Vagina (tissue), 2 donors: ENCODE measurements at regions of chr2 and their contacts with region 1.

Region 1: GRCh38 chr2:216698895-216699294 is 3.5 kb upstream of the IGFBP5 start:
- DNase-seq: no peak
- H3K4me3 ChIP-seq: no peak overlapping the region
- H3K27ac ChIP-seq: peak overlapping the region; percentile 71
- H3K4me1 ChIP-seq: peaks cover 41% of the 10 kb centered on the region
- H3K27me3 ChIP-seq: no peaks in the 10 kb centered on the region
- CTCF ChIP-seq: peak; percentile 34 to 56 (median 40)
- POLR2A ChIP-seq: no peak

Region 2: GRCh38 chr2:216974321-216975302 is 275.7 kb after region 1 on chr2:
- intact Hi-C with region 1: loop called (anchors 5 kb)
- DNase-seq: no peak
- H3K4me3 ChIP-seq: no peak overlapping the region
- H3K27ac ChIP-seq: peak overlapping the region; percentile 74
- H3K4me1 ChIP-seq: peaks cover 23% of the 10 kb centered on the region
- H3K27me3 ChIP-seq: no peaks in the 10 kb centered on the region
- CTCF ChIP-seq: no peak
- POLR2A ChIP-seq: no peak

Region 3: GRCh38 chr2:217166241-217166850 is 467.5 kb after region 1 on chr2:
- intact Hi-C with region 1: loop called (anchors 10 kb)
- DNase-seq: no peak
- H3K4me3 ChIP-seq: no peak overlapping the region
- H3K27ac ChIP-seq: no peak overlapping the region
- H3K4me1 ChIP-seq: no peaks in the 10 kb centered on the region
- H3K27me3 ChIP-seq: no peaks in the 10 kb centered on the region
- CTCF ChIP-seq: peak in 1 of 3 experiments; percentile 35
- POLR2A ChIP-seq: no peak

Region 4: DNA sequence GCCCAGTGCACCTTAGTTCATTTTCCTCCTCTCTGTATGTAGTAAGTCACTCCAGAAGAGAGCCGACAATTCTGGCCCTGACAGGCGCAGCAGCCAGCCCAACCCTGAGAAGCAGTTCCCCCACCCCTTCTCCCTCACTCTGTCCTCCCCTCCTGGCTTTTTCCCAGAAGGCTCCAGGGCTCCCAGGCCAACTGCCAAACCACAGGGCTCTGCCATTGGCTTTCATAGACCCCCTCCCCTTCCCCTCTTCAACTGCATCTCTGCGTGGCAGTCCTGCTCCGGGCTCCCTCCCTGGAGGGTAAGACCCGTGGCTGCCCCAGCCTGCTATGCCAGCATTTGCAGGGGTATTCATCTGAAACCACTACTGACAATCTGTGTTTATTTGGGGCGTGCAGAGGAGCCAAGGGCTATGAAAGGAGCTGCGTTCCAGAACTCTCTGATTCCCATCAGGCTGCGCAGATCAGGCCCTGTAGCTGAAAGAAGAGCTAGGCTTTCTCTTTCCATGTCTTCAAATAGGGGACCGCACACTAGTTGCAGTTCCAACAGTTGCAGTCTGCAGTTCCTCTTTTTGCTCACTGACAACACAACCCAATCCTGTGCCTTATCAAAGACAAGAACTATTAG is 549.5 kb after region 1 on chr2:
- intact Hi-C with region 1: loop called (anchors 5 kb)
- DNase-seq: no peak
- H3K4me3 ChIP-seq: no peak overlapping the region
- H3K27ac ChIP-seq: peak overlapping the region; percentile 80
- H3K4me1 ChIP-seq: peaks cover 35% of the 10 kb centered on the region
- H3K27me3 ChIP-seq: no peaks in the 10 kb centered on the region
- CTCF ChIP-seq: no peak
- POLR2A ChIP-seq: no peak

Region 5: DNA sequence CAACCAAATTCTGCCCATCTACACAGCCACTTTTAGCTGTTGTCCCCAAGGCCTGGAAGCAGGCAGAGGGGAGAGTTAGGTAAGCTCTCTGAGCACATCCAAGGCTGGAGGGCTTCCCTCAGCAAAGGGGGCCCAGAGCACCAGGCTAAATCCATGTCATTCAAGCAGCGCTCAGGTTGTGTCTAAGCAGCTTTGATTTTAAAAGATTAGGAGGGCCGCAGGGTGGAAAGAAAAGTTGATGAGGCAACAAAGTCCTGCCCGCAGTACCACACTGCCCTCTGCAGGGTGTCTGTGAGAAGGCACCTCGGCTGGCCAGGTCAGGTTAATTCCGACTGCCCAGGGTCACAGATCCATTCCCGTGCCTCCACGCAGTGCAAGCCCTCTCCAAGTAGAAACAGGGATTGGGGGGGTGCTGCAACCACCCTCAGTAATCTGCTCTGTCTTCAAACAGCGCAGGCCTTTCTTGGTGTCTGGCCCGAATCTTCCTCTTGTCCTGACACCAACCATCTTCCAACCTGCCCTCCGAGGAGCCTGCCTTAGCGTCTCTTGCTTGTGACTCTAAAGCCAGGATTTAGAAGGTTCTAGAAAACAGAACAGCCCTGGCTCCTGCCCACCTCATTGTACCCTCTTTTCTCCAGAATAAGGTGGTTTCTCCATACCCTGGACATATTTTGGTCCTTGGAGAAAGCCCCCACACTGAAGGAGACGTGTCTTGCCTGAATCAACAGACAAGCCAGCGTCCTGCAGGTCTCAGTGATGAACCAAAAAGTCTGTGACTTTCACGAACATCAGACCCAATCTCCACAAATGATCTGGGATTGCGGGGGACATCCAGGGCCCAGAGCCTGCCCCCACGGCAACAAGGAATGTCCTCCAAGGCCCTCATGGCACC is 1014.7 kb after region 1 on chr2:
- intact Hi-C with region 1: loop called (anchors 5 kb)
- DNase-seq: peak in 1 of 2 donors; percentile 86
- H3K4me3 ChIP-seq: no peak overlapping the region
- H3K27ac ChIP-seq: peak overlapping the region; percentile 75
- H3K4me1 ChIP-seq: peaks cover 52% of the 10 kb centered on the region
- H3K27me3 ChIP-seq: no peaks in the 10 kb centered on the region
- CTCF ChIP-seq: peak; percentile 70 to 96 (median 95)
- POLR2A ChIP-seq: no peak

Region 6: DNA sequence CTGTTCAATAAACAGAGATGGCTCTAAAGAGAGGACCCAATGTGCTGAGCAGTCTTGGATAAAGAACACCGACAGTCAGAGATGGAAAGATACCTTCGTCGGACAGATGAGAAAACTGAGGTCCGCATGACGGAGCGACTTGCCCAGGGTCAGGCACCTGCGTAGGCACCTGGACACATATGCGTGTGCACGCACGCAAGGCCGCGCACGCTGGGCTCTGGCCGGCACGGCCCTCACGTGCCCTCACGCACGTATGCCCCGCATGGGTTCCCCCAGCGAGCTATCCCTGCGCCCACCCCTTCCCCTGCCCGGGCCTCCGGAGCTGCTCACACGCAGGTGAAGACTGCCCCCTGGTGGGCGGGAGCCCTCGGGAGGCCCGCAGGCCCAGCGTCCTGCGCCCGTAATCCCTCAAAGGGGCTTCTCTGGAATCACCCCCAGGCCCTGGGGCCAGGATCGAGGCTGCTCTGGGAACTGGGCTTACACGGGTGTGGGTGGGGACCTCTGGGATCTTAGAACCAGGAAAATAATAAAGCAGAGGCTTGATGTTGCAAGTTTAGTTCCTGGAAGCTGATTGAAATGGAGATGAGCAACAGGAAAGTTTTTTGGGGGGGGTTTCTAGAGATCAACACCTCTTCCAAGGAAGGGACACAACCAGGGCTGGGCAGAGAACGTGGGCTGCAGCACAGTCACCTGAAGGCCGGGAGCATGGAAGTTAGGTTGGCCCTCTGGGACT is 1057.6 kb after region 1 on chr2:
- intact Hi-C with region 1: loop called (anchors 10 kb)
- DNase-seq: peak in 1 of 2 donors; percentile 77
- H3K4me3 ChIP-seq: no peak overlapping the region
- H3K27ac ChIP-seq: peak overlapping the region; percentile 15
- H3K4me1 ChIP-seq: peaks cover 16% of the 10 kb centered on the region
- H3K27me3 ChIP-seq: no peaks in the 10 kb centered on the region
- CTCF ChIP-seq: peak; percentile 47 to 95 (median 83)
- POLR2A ChIP-seq: no peak

Region 7: DNA sequence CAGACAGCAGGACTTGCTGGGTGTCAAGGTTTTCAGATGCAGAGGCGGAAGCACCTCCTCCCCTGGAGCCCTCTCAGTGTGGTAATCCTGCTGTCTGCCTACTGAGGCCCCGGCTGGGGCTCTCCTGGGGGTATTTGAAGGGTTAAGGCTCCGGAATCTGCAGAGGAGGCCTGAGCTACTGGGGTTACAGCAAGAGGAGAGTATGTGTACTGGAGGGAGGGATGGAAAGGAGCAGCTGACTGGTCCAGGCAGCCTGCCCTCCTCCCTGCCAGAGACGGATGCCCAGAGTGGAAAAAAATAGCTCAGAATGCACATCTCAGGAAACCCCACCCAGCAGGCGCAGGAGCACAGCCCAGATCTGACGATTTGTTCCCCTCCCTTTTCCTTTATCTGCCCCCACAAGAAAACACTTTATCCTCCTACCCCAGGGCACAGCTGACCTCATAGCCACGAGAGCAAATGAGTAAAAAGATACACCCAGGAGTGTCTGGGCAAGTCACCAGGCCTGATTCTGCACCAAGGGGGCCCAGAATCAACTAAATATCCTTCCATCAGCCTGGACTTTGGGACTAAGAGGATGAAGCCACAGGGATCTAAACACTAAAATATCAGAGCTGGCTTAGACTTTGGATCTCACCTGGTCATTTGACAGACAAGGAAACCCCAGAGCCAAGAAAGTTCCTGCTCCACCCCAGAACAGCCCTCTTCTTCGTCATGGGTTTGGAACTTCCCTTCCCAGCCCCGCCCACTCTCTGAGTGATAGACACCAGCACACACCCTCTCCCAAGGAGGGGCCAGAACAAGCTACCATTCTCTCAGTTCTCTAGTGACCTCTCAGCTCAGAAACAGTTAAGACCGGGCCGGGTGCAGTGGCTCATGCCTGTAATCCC is 1587.9 kb after region 1 on chr2:
- intact Hi-C with region 1: no loop called
- DNase-seq: peak in 1 of 2 donors; percentile 99
- H3K4me3 ChIP-seq: peak overlapping the region; percentile 54
- H3K27ac ChIP-seq: peak overlapping the region; percentile 100
- H3K4me1 ChIP-seq: peaks cover 96% of the 10 kb centered on the region
- H3K27me3 ChIP-seq: no peaks in the 10 kb centered on the region
- CTCF ChIP-seq: peak in 1 of 3 experiments; percentile 7
- POLR2A ChIP-seq: peak in 1 of 2 donors; percentile 59